AG04449 (cell line): ENCODE measurements at regions of chr11 and their contacts with region 1.

Region 1: DNA sequence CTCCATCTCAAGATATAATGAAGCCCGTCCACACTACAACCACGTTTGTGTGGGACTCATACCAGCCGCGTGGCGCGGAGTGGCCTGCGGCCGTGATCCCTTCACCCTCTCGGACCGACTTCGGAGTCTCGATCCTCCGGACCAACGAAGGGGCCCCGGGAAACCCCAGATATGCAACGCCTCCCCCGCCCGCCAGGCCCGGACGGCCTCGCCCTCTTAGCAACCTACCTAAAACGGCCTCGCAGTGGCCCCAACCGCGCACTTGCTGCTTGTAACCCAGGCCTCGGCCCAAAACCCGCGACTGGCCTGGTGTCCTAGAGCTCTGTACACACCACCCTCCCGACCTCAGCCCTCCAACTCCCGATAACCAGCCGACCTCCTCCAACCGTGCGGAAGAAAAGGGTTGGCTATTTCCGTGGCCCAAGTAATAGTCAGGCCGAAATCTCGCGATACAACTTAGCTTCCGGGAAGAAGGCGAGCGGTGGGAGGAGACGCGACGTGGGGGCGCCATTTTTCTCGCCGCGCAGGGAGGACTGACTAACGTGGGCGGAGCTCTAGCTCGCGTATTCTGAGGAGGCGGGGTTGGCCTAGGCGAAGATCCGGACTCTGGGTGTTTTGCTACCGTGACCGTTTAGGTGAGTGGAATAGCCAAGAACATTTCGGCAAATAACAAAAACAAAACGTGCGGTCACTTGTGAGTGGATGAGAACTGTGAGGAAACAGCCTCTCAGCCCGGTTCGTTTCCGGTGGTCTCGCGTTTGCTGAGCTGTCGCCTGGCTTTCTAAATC is at the starts of genes C11orf54 and TAF1D:
- DNase-seq: peak; percentile 73
- H3K4me3 ChIP-seq: peak within 1 kb of the TSS; percentile 92
- CTCF ChIP-seq: no peak

Region 2: DNA sequence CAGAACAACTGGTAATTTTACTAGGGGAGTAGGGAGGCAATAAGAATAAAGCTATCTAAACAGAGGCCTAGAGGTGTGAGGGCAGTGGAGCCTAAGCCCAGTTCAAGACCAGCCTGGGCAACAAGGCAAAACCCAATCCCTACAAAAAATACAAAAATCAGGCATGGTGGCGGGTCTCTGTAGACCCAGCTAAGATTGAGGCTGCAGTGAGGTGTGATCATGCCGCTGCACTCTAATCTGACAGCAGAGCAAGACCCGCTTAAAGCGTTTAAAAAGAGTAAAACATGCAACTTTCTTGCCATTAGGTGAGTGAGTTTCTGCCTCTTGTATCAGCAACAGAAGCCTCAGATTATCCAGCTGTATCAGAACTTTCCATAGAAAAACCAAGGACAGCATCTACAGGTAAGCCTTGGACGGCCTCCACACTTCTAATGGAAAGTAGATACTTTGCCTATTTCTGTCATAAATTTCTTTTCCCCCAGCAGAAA is 12.1 kb before region 1 on chr11:
- CTCF ChIA-PET with region 1: interaction called, 10 read pairs
- POLR2A ChIA-PET with region 1: interaction called, 26 read pairs
- DNase-seq: no peak
- H3K4me3 ChIP-seq: no peak overlapping the region
- CTCF ChIP-seq: no peak

Region 3: DNA sequence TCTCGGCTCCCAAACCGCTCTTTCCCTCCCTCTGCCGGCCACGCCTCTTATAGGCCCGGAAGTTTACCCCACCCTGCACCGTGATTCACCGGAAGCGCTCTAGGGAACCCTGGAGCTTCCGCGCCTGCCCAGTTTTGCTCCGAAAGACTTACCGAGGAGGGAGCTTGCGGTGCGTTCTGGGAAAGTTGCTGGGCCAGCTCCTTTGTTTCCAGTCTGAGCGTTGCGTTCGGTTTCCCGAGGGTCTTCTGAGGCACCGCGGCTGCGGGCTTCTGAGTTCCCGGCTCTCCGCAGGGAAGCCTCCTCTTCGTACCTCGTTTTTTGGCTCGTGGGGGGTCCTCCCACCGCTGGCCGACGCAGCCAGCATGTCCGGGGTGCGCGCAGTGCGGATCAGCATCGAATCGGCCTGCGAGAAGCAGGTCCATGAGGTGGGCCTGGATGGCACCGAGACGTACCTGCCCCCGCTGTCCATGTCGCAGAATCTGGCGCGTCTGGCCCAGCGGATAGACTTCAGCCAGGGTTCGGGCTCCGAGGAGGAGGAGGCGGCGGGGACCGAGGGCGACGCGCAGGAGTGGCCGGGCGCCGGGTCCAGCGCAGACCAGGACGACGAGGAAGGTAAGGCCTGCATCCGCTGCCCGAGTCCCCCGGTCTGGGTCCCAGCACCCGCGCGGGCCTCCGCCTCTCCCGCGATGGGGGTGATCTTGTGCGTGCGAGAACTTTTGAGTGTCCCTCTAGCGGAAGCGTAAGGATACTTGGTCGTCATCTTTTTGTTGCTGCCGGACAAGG is 43.1 kb after region 1 on chr11 and contains the start of gene MED17:
- CTCF ChIA-PET with region 1: interaction called, 3 read pairs
- POLR2A ChIA-PET with region 1: interaction called, 47 read pairs
- DNase-seq: peak; percentile 60
- H3K4me3 ChIP-seq: peak within 1 kb of the TSS; percentile 99
- CTCF ChIP-seq: peak; percentile 53

Region 4: DNA sequence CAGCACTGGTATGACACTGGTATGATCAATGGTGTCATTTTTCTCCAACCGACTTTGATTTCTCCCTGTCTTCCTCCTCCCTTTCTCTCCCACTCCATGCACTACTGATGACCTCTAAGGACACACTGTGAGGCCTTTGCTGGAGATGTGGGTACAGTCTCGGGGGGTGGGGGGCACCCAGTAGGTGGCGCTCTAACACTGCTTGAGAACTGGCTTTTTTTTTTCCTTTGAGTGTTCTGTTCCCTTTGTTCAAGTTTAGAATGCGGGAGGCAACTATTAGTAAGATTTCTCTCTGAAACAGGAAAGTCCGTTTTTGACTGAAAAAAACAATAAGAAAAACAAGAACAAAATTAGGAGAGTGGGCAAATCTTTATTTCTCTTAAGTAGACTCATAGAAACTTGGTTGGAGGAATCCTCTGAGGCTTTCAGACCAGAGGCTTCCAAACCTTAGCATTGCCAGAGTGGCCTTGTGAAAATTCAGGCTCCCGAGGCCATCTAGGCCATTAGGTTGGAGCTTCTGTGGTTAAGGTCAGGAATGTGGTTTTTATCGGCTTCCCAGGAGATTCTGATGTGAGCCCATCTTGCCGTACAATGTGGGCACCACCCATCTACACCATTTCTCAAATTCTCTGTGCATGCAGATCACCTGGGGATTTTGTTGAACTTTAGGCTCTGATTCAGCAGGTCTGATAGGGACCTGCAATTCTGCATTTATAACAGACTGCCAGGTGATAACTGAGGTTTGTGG is 430.6 kb after region 1 on chr11:
- CTCF ChIA-PET with region 1: no interaction called
- POLR2A ChIA-PET with region 1: no interaction called
- DNase-seq: no peak
- H3K4me3 ChIP-seq: no peak overlapping the region
- CTCF ChIP-seq: peak; percentile 81